ENCODE measurements at regions of chr1 and their contacts with region 1.

Region 1: GRCh38 chr1:26284597-26285360 is 4.9 kb downstream of the SH3BGRL3 start:
- DNase-seq: peak; percentile 96
- H3K4me3 Mint-ChIP-seq: peak overlapping the region; percentile 73
- H3K27ac Mint-ChIP-seq: peak overlapping the region; percentile 97
- H3K4me1 Mint-ChIP-seq: peaks cover 90% of the 10 kb centered on the region
- H3K27me3 Mint-ChIP-seq: no peaks in the 10 kb centered on the region

Region 2: DNA sequence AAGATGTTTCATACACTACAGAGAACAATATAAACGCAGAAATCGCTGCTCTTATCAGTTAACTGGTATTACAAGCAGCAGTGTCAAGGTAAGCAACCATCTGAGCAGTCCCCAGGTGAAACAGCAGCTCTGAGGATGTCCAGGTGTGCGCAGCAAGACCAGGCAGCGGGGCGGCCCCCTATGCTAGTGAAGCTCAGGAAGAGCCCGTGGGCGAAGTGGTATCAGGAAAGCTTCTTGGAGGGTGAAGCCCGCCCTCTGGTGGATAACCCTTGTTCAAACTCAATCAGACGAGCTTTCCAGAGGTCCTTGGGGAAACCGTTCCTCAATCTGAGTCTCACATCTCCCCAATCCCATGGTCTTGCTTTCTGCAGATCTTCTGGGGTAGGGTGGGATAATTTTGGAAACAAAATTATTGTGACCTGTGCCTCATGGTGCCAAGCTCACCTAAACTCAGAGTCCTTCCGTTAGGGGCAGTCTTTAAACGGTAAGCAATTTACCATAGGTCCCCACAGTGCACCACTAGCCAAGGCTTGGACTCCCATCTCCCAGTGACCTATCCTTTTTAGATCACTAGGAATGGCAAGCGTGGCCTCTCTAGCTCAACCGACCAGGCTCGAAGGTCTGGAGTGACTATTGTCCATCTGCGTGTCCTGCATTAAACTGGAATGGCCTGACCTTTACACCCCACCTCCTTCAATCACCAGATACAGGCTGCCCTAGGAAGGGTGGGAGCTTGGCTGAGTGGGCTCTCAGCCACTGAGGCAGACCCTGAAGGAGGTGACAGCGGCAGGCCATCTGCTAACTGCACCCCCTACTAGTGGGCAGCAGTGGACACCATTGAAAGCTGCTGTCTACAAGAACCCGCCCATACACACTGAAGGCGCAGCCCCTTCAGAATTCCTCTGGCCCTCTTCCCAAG is 139.5 kb before region 1 on chr1:
- CTCF ChIA-PET with region 1: no interaction called
- POLR2A ChIA-PET with region 1: no interaction called
- DNase-seq: peak; percentile 83
- H3K4me3 Mint-ChIP-seq: no peak overlapping the region
- H3K27ac Mint-ChIP-seq: no peak overlapping the region
- H3K4me1 Mint-ChIP-seq: peaks cover 2% of the 10 kb centered on the region
- H3K27me3 Mint-ChIP-seq: peaks cover 21% of the 10 kb centered on the region

Region 3: GRCh38 chr1:26300586-26301275 is 16.0 kb after region 1 on chr1:
- CTCF ChIA-PET with region 1: interaction called, 78 read pairs
- POLR2A ChIA-PET with region 1: no interaction called
- DNase-seq: no peak
- H3K4me3 Mint-ChIP-seq: no peak overlapping the region
- H3K27ac Mint-ChIP-seq: peak overlapping the region; percentile 79
- H3K4me1 Mint-ChIP-seq: peaks cover 34% of the 10 kb centered on the region
- H3K27me3 Mint-ChIP-seq: no peaks in the 10 kb centered on the region

Region 4: GRCh38 chr1:26306290-26307229 is 21.8 kb after region 1 on chr1 and contains the start of gene UBXN11:
- CTCF ChIA-PET with region 1: interaction called, 78 read pairs
- POLR2A ChIA-PET with region 1: interaction called, 9 read pairs
- DNase-seq: peak; percentile 97
- H3K4me3 Mint-ChIP-seq: peak within 1 kb of the TSS; percentile 99
- H3K27ac Mint-ChIP-seq: peak within 1 kb of the TSS; percentile 93
- H3K4me1 Mint-ChIP-seq: peaks cover 48% of the 10 kb centered on the region
- H3K27me3 Mint-ChIP-seq: no peaks in the 10 kb centered on the region
- total RNA-seq, gene UBXN11: 48.6 to 51.3 TPM

Region 5: DNA sequence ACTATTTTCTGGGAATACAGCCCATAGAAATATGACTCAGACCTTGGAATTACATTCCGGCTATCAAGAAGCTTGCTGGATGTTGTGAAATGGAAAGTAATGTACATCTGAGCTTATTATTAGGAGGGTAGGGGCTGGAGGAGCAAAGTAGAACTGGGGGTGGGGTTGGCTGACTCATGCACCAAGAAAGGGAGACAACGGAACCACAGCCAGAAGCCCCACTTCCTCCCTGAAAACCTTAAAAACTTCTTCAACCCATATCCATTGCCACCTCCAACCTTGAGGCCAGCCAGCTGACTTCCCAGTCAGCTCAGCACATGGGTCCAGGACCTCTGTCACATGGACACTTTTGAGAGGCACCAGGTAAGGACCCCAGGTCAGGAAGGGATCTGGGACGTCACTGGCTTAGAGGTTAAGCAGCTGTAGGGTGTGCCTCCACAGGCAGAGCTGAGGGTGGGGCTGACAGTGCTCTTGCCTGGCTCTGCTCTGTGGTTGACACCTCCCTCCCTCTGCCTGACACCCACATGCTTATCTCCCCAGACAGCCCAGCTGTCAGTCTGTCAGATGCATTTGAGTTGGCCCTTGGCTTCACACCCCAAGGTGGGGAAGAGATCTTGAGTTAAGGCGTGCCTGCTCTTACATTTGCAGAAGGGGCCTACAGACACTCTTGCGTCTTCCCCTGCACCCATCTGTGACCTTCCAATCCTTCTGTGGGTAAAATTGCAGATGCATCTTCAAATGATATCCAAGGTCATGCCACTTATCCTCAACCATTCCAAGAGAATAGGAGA is 93.5 kb after region 1 on chr1:
- CTCF ChIA-PET with region 1: interaction called, 20 read pairs
- POLR2A ChIA-PET with region 1: interaction called, 4 read pairs
- DNase-seq: peak; percentile 88
- H3K4me3 Mint-ChIP-seq: peak overlapping the region; percentile 30
- H3K27ac Mint-ChIP-seq: peak overlapping the region; percentile 88
- H3K4me1 Mint-ChIP-seq: peaks cover 80% of the 10 kb centered on the region
- H3K27me3 Mint-ChIP-seq: no peaks in the 10 kb centered on the region

Region 6: DNA sequence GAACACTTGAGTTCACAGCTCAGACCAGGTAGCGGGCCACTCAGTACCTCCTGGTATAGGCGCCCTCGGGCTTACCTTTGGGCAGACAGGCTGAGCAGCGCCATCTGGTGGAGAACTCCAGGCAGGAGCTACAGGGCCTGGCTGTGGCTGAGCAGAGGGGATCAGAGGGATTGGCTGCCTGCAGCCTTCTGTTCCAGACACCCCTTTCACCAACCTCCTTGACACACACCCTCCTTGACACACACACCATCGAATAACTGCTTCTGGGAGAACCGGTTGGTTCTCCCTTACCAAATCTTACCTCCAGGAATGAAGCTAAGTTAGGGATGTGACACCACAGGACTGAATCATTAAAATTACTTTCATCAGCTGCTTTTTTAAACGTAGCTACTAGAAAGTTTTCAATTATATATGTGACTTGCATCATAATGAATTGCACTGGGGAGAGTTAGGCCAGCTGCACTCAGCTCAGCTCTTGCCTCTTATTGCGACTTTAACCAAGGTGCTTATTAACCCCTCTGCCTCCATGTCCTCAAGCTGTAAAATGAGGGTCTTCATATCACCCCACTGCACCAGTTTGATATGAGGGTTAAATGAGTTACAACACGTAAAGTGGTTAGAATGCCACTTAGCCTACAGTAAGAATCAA is 132.5 kb after region 1 on chr1:
- CTCF ChIA-PET with region 1: interaction called, 20 read pairs
- POLR2A ChIA-PET with region 1: no interaction called
- DNase-seq: peak; percentile 92
- H3K4me3 Mint-ChIP-seq: no peak overlapping the region
- H3K27ac Mint-ChIP-seq: no peak overlapping the region
- H3K4me1 Mint-ChIP-seq: no peaks in the 10 kb centered on the region
- H3K27me3 Mint-ChIP-seq: peaks cover 53% of the 10 kb centered on the region

Measured in activated CD4-positive, alpha-beta T cell treated with anti-CD3 and anti-CD28 coated beads, Interleukin-2, amount 10 ng/mL, durations not matched to agents 7 days and 5 days (primary cell).